Activated CD4-positive, alpha-beta memory T cell treated with anti-CD3 and anti-CD28 coated beads, Interleukin-2, amount 10 ng/mL, durations not matched to agents 7 days and 5 days (primary cell): ENCODE measurements at regions of chr11 and their contacts with region 1.

Region 1: DNA sequence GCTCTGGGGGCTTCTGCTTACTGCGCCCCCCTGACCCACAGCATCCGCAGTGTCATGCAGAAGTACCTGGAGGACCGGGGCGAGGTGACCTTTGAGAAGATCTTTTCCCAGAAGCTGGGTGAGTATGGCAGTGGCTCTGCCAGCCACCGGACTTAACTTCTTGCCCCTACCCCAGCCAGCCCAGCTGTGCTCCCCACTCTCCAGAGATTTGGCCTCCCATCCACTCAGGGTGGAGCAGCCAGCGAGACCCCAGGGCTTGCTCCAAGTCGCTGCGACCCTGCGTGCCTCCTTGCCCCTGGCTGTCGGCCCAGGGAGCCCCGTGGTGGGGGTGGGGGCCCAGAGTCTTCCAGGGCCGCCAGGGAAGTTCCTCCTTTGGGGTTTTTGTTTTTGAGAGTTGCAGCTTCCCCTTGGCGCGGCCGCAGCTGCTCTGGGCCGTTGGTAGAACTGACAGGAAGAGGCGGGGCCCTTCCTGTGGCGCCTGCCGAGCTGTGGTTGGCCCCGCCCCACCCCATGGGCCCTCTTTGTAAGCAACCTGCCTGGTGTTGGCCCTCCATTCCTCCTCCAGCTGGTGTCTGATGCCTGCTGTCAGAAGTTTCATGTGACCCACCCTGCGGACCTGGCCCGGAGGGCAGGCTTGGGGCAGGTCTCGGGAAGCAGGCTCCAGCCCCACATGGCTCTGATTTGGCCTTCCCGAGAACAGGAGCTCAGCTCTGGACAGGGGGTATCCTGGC is 11.1 kb downstream of the GRK2 start:
- DNase-seq: peak; percentile 94
- H3K4me3 Mint-ChIP-seq: peak overlapping the region; percentile 77
- H3K27ac Mint-ChIP-seq: peak overlapping the region; percentile 93
- H3K4me1 Mint-ChIP-seq: peaks cover 80% of the 10 kb centered on the region
- H3K27me3 Mint-ChIP-seq: no peaks in the 10 kb centered on the region

Region 2: DNA sequence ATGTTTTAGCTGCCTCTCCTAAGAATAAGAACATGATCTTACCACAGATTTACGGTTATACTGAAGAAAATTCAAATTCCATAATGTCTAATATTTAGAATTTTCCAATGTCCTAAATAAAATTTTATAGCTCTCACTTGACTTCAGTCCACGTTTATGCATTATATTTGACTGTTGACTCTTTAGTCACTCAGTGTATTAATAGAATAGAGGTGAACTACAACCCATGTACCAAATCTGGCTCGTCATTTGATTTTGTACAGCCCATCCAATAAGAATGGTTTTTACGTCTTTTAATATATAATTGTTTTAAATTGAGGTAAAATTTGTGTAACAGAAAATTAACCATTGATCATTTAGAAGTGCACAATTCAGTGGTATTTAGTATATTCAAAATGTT is 123.4 kb before region 1 on chr11:
- CTCF ChIA-PET with region 1: no interaction called
- POLR2A ChIA-PET with region 1: no interaction called
- DNase-seq: no peak
- H3K4me3 Mint-ChIP-seq: no peak overlapping the region
- H3K27ac Mint-ChIP-seq: no peak overlapping the region
- H3K4me1 Mint-ChIP-seq: peaks cover 3% of the 10 kb centered on the region
- H3K27me3 Mint-ChIP-seq: no peaks in the 10 kb centered on the region

Region 3: GRCh38 chr11:67303132-67303834 is 25.9 kb after region 1 on chr11 and contains the start of gene SSH3:
- CTCF ChIA-PET with region 1: interaction called, 6 read pairs
- POLR2A ChIA-PET with region 1: interaction called, 19 read pairs
- DNase-seq: peak; percentile 60
- H3K4me3 Mint-ChIP-seq: peak within 1 kb of the TSS; percentile 68
- H3K27ac Mint-ChIP-seq: no peak within 1 kb of the TSS
- H3K4me1 Mint-ChIP-seq: peaks cover 18% of the 10 kb centered on the region
- H3K27me3 Mint-ChIP-seq: no peaks in the 10 kb centered on the region
- total RNA-seq, gene SSH3: 15.4 to 19.0 TPM

Region 4: DNA sequence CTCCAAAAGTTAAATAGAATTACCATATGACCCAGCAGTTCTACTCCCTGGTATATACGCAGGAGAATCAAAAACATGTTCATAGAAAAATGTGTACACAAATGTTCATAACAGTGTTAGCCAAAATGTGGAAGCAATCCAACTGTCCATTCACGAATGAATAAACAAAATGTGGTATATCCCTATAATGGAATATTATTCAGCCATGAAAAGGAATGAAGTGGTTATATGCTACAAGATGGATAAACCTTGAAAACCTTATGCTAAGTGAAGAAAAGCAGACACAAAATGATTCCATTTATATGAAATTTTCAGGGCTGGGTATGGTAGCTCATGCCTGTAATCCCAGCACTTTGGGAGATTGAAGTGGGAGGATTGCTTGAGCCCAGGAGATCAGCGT is 59.9 kb after region 1 on chr11:
- CTCF ChIA-PET with region 1: no interaction called
- POLR2A ChIA-PET with region 1: no interaction called
- DNase-seq: no peak
- H3K4me3 Mint-ChIP-seq: no peak overlapping the region
- H3K27ac Mint-ChIP-seq: no peak overlapping the region
- H3K4me1 Mint-ChIP-seq: no peaks in the 10 kb centered on the region
- H3K27me3 Mint-ChIP-seq: no peaks in the 10 kb centered on the region

Region 5: DNA sequence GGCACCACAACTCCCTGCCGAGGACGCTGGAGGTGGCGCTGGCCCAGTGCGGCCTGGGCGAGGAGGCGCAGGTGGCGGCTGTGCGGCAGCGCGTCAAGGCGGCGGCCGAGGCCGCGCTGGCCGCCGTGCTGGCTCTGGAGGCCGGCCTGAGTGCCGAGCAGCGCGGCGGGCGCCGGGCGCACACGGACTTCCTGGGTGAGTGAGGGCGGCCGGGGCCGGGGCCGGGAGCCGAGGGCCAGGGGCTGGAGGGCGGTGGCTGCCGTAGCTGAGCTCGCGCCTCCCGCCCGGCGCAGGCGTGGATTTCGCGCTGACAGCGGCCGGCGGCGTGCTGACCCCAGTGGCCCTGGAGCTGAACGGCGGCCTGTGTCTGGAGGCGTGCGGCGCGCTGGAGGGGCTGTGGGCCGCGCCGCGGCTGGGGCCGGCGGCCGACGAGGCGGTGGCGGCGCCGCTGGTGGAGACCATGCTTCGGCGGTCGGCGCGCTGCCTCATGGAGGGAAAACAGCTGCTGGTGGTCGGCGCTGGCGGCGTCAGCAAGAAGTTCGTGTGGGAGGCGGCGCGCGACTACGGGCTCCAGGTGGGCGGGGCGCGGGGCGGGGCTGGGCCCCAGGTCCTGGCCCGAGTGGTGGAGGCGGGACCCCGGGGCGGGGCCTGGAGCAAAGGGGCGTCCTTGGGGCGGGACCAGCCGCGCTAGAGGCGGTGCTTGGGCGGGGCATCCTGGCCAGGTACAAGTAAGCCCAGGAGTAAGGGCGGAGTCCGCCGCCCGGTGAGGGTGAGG is 143.4 kb after region 1 on chr11:
- CTCF ChIA-PET with region 1: no interaction called
- POLR2A ChIA-PET with region 1: no interaction called
- DNase-seq: peak; percentile 97
- H3K4me3 Mint-ChIP-seq: peak overlapping the region; percentile 71
- H3K27ac Mint-ChIP-seq: no peak overlapping the region
- H3K4me1 Mint-ChIP-seq: peaks cover 56% of the 10 kb centered on the region
- H3K27me3 Mint-ChIP-seq: peaks cover 12% of the 10 kb centered on the region